CD4-positive, alpha-beta memory T cell (primary cell): ENCODE measurements at regions of chr17 and their contacts with region 1.

Region 1: DNA sequence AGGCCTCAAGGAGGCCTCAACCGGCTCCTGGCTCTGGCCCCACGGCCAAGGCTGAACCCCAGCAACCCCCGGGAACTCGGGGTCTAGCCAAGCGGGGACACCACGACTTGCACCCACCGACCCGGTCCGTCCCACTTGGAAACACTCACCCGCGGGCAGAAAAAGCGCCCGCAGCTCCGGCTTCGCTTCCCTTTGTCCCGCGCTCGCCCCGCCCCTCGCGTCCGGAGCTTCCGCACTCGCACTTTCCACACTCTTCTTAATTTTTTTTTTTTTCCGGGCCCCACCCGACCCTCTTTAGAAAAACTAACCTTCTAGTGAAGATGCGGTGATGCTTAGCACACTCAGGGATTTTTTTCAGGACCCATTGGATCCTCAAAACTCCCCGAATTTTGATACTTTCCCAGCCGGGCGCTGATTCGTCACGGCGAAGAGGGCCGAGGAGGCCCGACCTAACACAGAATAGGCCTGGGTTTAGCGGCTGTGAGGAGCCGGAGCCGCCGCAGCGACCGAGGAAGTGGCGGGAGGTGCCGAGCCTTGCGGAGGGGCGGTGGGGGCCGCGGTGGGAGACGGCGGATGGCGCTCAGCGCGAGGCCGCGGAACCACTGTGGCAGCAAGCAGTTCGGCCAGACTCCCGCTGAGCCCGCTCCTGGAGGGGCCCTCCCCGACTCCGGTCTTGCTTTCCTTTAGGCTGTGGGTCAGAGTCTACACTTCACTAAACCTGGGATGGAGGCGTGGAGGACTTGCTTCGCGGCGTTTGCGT is at the start of gene SMARCE1:
- DNase-seq: peak; percentile 76 to 83 (median 77)
- H3K4me3 ChIP-seq: peak within 1 kb of the TSS; percentile 82 to 92
- H3K4me3 Mint-ChIP-seq: peak within 1 kb of the TSS; percentile 88 to 98 (median 94)
- H3K27ac ChIP-seq: peak within 1 kb of the TSS; percentile 95
- H3K27ac Mint-ChIP-seq: peak within 1 kb of the TSS; percentile 98 to 100 (median 99)
- H3K4me1 ChIP-seq: peaks cover 47% of the 10 kb centered on the region
- H3K4me1 Mint-ChIP-seq: peaks cover 23 to 58% (median 37%) of the 10 kb centered on the region in 4 donors
- H3K27me3 ChIP-seq: no peaks in the 10 kb centered on the region
- H3K27me3 Mint-ChIP-seq: no peaks in the 10 kb centered on the region
- total RNA-seq, gene SMARCE1: 87.6 to 91.0 TPM

Region 2: GRCh38 chr17:40542558-40543411 is 105.0 kb before region 1 on chr17:
- CTCF ChIA-PET with region 1: no interaction called
- POLR2A ChIA-PET with region 1: interaction called, 10 read pairs
- intact Hi-C with region 1: no loop called
- DNase-seq: peak in 4 of 5 donors; percentile 37 to 82 (median 50)
- H3K4me3 ChIP-seq: no peak overlapping the region
- H3K4me3 Mint-ChIP-seq: peak overlapping the region in 6 of 8 donors; percentile 67 to 94 (median 88)
- H3K27ac ChIP-seq: peak overlapping the region; percentile 69
- H3K27ac Mint-ChIP-seq: peak overlapping the region; percentile 94 to 100 (median 99)
- H3K4me1 ChIP-seq: peaks cover 90% of the 10 kb centered on the region
- H3K4me1 Mint-ChIP-seq: peaks cover 60 to 91% (median 75%) of the 10 kb centered on the region in 4 donors
- H3K27me3 ChIP-seq: no peaks in the 10 kb centered on the region
- H3K27me3 Mint-ChIP-seq: peaks cover 0 to 4% of the 10 kb centered on the region in 2 donors

Region 3: DNA sequence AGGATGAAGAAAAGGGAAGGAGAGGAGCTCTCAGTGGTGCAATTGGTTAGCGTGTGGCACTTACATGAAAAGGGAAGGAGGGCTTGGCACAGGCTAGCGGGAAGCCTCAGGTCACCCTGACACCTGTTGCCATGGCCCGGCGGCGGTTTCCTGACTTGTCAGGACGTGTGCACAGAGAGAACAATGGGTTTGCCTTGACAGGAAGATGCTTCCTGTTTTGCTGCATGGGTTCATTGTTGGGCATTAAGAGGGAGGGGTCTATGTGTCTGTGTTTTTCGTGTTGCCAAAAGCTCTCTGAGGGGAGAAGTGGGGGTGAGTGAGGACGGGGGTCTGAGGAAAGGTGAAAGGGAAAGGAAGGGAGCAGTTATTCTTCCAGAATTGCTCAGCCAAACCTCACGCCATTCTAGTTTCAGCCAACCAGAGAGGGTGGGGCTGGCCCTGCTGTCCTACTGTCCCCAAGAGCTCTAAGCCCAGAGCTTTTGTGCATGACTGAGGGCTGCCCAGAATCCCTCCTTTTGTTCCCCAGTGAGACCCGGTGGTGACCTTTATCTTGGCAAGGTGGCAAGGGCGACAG is 65.4 kb before region 1 on chr17:
- CTCF ChIA-PET with region 1: no interaction called
- POLR2A ChIA-PET with region 1: interaction called, 10 read pairs
- intact Hi-C with region 1: no loop called
- DNase-seq: peak; percentile 74 to 78 (median 76)
- H3K4me3 ChIP-seq: peak overlapping the region; percentile 28 to 34
- H3K4me3 Mint-ChIP-seq: peak overlapping the region; percentile 32 to 84 (median 80)
- H3K27ac ChIP-seq: peak overlapping the region; percentile 47
- H3K27ac Mint-ChIP-seq: peak overlapping the region; percentile 75 to 96 (median 95)
- H3K4me1 ChIP-seq: peaks cover 72% of the 10 kb centered on the region
- H3K4me1 Mint-ChIP-seq: peaks cover 57 to 95% (median 78%) of the 10 kb centered on the region in 4 donors
- H3K27me3 ChIP-seq: no peaks in the 10 kb centered on the region
- H3K27me3 Mint-ChIP-seq: no peaks in the 10 kb centered on the region

Region 4: GRCh38 chr17:40608061-40608588 is 39.7 kb before region 1 on chr17:
- CTCF ChIA-PET with region 1: no interaction called
- POLR2A ChIA-PET with region 1: interaction called, 28 read pairs
- intact Hi-C with region 1: no loop called
- DNase-seq: peak; percentile 79 to 88 (median 82)
- H3K4me3 ChIP-seq: peak overlapping the region; percentile 14 to 43
- H3K4me3 Mint-ChIP-seq: peak overlapping the region; percentile 74 to 90 (median 78)
- H3K27ac ChIP-seq: peak overlapping the region; percentile 97
- H3K27ac Mint-ChIP-seq: peak overlapping the region; percentile 94 to 100 (median 100)
- H3K4me1 ChIP-seq: peaks cover 99% of the 10 kb centered on the region
- H3K4me1 Mint-ChIP-seq: peaks cover 71 to 98% (median 86%) of the 10 kb centered on the region in 4 donors
- H3K27me3 ChIP-seq: no peaks in the 10 kb centered on the region
- H3K27me3 Mint-ChIP-seq: no peaks in the 10 kb centered on the region

Region 5: DNA sequence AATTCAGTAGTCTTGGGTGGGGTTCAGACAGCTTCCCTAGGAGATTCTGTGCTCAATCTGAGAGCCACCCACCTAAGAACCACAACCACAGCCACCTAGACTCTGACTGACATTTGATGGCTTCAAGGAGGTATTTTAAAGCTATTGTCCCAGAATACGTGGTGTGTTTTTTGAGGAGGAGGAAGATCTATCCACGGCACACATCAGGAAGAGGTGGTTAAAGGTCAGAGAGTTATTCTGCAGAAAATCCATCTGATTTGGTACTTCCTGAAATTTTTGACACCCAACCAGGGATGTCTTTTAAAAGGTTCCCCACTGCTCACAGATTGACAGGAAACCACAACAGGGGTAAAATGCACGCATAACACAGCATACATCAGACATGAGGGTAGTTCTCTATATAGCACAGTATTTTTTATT is 25.3 kb before region 1 on chr17:
- CTCF ChIA-PET with region 1: interaction called, 6 read pairs
- POLR2A ChIA-PET with region 1: interaction called, 32 read pairs
- intact Hi-C with region 1: no loop called
- DNase-seq: peak; percentile 34 to 59 (median 46)
- H3K4me3 ChIP-seq: no peak overlapping the region
- H3K4me3 Mint-ChIP-seq: peak overlapping the region in 7 of 8 donors; percentile 1 to 74 (median 49)
- H3K27ac ChIP-seq: peak overlapping the region; percentile 7
- H3K27ac Mint-ChIP-seq: peak overlapping the region; percentile 37 to 88 (median 72)
- H3K4me1 ChIP-seq: peaks cover 51% of the 10 kb centered on the region
- H3K4me1 Mint-ChIP-seq: peaks cover 31 to 42% (median 38%) of the 10 kb centered on the region in 4 donors
- H3K27me3 ChIP-seq: no peaks in the 10 kb centered on the region
- H3K27me3 Mint-ChIP-seq: no peaks in the 10 kb centered on the region

Region 6: DNA sequence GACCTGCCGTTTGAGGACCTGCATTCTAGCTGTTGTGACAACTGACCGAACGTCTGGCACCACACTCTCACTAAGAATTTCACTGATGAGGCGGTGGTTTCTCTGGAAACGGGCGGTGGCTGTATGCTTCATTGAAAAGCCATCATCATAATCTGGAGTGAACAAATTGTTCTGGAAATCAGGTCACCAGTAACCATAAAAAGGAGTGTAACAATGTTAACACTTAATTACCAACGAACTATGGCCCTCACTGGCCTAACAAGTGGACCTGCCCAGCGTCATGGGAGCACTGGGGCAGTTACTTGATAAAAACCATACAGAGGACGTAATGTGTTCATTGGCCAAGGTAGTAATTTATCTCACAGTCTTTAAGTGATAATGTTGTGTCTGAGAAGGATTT is 15.6 kb before region 1 on chr17:
- CTCF ChIA-PET with region 1: no interaction called
- POLR2A ChIA-PET with region 1: interaction called, 32 read pairs
- intact Hi-C with region 1: no loop called
- DNase-seq: no peak
- H3K4me3 ChIP-seq: no peak overlapping the region
- H3K4me3 Mint-ChIP-seq: no peak overlapping the region
- H3K27ac ChIP-seq: no peak overlapping the region
- H3K27ac Mint-ChIP-seq: peak overlapping the region in 1 of 7 donors; percentile 41
- H3K4me1 ChIP-seq: no peaks in the 10 kb centered on the region
- H3K4me1 Mint-ChIP-seq: peaks cover 0 to 3% (median 1%) of the 10 kb centered on the region in 4 donors
- H3K27me3 ChIP-seq: no peaks in the 10 kb centered on the region
- H3K27me3 Mint-ChIP-seq: no peaks in the 10 kb centered on the region

Region 7: GRCh38 chr17:40726919-40727318 is 79.1 kb after region 1 on chr17:
- CTCF ChIA-PET with region 1: no interaction called
- POLR2A ChIA-PET with region 1: no interaction called
- intact Hi-C with region 1: loop called (anchors 1 kb)
- DNase-seq: peak in 4 of 5 donors; percentile 11 to 27 (median 17)
- H3K4me3 ChIP-seq: no peak overlapping the region
- H3K4me3 Mint-ChIP-seq: no peak overlapping the region
- H3K27ac ChIP-seq: no peak overlapping the region
- H3K27ac Mint-ChIP-seq: no peak overlapping the region
- H3K4me1 ChIP-seq: no peaks in the 10 kb centered on the region
- H3K4me1 Mint-ChIP-seq: no peaks in the 10 kb centered on the region
- H3K27me3 ChIP-seq: peaks cover 10% of the 10 kb centered on the region
- H3K27me3 Mint-ChIP-seq: peaks cover 14 to 19% of the 10 kb centered on the region in 2 donors